ENCODE measurements at regions of chr6 and their contacts with region 1.

Region 1: DNA sequence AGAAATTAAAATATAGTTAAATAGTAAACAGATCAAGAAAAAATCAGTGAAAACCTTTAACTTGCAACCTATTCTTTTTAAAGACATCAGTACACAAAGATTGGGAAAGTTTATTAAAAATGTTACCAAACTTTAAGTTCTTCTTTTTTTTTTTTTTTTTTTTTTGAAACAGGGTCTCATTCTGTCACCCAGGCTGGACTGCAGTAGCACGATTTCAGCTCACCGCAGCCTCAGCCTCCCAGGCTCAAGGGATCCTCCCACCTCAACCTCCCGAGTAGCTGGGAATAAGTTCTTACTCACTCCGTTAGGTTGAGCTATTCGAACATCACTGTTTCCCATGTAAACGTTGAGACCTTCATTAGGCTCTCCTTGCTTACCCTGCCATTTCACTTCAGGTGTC is 5.6 kb downstream of the MAP3K5 start:
- DNase-seq: no peak
- H3K4me3 ChIP-seq: no peak overlapping the region
- H3K4me3 Mint-ChIP-seq: no peak overlapping the region
- H3K27ac Mint-ChIP-seq: no peak overlapping the region
- H3K4me1 ChIP-seq: no peaks in the 10 kb centered on the region
- H3K4me1 Mint-ChIP-seq: no peaks in the 10 kb centered on the region
- H3K27me3 ChIP-seq: no peaks in the 10 kb centered on the region
- H3K27me3 Mint-ChIP-seq: no peaks in the 10 kb centered on the region
- CTCF ChIP-seq: no peak

Region 2: DNA sequence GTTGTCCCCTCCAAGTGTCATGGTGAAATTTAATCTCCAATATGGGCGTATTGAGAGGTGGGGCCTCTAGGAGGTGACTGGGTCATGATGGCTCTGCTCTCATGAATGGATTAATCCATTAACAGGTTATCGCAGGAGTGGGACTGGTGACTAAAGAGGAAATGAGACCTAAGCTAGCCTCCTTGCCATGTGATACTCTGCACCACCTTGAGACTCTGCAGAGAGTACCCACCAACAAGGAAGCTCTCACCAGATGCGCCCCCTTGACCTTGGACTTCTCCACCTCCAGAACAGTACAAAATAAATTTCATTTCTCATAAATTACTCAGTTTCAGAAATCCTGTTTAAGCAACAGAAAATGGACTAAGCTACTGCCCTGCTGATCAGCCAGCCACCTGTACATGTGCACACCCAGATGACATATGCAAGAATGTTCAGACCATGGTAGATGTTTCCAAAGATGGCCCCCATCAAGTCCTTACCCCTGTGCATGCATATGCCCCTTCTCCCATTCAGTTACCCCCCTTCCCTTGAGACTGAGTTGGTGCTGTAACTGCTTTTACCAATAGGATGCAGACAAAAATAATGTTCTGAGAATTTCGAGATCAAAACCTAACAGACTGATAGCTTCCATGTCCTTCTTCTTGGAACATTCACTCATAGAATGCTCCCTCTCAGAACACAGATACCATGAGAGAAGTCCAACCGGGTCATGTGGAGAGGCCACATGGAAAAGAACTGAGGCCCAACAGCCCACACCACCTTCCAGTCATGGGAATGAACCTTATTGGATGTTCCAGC is 22.7 kb before region 1 on chr6:
- CTCF ChIA-PET with region 1: no interaction called
- POLR2A ChIA-PET with region 1: interaction called, 18 read pairs
- intact Hi-C with region 1: no loop called
- DNase-seq: no peak
- H3K4me3 ChIP-seq: no peak overlapping the region
- H3K4me3 Mint-ChIP-seq: no peak overlapping the region
- H3K27ac Mint-ChIP-seq: no peak overlapping the region
- H3K4me1 ChIP-seq: no peaks in the 10 kb centered on the region
- H3K4me1 Mint-ChIP-seq: no peaks in the 10 kb centered on the region
- H3K27me3 ChIP-seq: no peaks in the 10 kb centered on the region
- H3K27me3 Mint-ChIP-seq: no peaks in the 10 kb centered on the region
- CTCF ChIP-seq: no peak

Region 3: DNA sequence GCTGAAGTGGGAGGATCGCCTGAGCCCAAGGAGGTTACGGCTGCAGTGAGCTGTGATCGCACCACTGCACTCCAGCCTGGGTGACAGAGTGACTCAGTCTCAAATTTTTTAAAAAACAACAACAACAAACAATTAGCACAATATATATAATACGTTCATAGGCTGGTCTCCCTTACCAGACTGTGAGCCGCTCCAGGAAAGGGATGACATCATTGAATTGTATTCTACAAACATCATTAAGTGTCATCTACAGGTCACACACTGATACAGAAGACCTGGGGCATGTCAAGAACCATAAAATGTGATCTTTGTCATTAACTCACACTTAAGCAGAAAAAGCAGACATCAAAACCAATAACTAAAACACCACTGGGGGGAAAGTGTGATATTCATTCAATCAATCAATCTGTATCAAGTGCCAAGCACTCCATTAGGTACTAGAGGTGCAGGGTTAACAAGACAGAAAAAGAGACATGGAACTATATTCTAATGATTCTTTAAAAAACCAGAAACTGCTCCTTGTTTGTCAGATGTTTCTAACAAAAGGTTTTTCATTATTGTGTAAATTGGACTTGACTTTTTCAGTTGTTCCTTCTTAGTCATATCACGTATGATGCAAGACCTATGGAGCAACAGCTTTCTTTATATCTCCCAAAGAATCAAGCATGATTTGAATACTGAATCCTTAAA is 12.2 kb before region 1 on chr6:
- CTCF ChIA-PET with region 1: no interaction called
- POLR2A ChIA-PET with region 1: no interaction called
- intact Hi-C with region 1: no loop called
- DNase-seq: no peak
- H3K4me3 ChIP-seq: no peak overlapping the region
- H3K4me3 Mint-ChIP-seq: no peak overlapping the region
- H3K27ac Mint-ChIP-seq: no peak overlapping the region
- H3K4me1 ChIP-seq: peaks cover 4% of the 10 kb centered on the region; the same call in 1 of the 2 replicates
- H3K4me1 Mint-ChIP-seq: peaks cover 8% of the 10 kb centered on the region
- H3K27me3 ChIP-seq: no peaks in the 10 kb centered on the region
- H3K27me3 Mint-ChIP-seq: no peaks in the 10 kb centered on the region
- CTCF ChIP-seq: no peak

Region 4: DNA sequence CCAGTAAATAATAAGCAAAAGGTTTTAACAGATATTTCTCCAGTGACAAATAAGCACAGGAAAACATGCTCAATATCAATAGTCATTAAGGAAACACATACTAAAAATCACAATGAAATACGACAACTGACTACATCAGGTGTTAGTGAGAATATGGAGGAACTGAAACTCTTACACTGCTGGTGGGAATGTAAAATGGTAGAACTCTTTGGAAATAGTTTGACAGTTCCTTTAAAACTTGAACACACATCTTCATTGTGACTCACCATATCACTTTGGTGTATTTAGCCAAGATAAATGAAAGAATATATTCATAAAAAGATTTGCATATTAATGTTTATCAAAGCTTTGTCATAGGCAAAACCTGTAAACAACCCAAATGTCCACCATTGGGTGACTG is 16.9 kb after region 1 on chr6:
- CTCF ChIA-PET with region 1: no interaction called
- POLR2A ChIA-PET with region 1: no interaction called
- intact Hi-C with region 1: no loop called
- DNase-seq: no peak
- H3K4me3 ChIP-seq: no peak overlapping the region
- H3K4me3 Mint-ChIP-seq: no peak overlapping the region
- H3K27ac Mint-ChIP-seq: no peak overlapping the region
- H3K4me1 ChIP-seq: no peaks in the 10 kb centered on the region
- H3K4me1 Mint-ChIP-seq: no peaks in the 10 kb centered on the region
- H3K27me3 ChIP-seq: no peaks in the 10 kb centered on the region
- H3K27me3 Mint-ChIP-seq: no peaks in the 10 kb centered on the region
- CTCF ChIP-seq: no peak